ENCODE measurements at regions of chr19 and their contacts with region 1.

Region 1: DNA sequence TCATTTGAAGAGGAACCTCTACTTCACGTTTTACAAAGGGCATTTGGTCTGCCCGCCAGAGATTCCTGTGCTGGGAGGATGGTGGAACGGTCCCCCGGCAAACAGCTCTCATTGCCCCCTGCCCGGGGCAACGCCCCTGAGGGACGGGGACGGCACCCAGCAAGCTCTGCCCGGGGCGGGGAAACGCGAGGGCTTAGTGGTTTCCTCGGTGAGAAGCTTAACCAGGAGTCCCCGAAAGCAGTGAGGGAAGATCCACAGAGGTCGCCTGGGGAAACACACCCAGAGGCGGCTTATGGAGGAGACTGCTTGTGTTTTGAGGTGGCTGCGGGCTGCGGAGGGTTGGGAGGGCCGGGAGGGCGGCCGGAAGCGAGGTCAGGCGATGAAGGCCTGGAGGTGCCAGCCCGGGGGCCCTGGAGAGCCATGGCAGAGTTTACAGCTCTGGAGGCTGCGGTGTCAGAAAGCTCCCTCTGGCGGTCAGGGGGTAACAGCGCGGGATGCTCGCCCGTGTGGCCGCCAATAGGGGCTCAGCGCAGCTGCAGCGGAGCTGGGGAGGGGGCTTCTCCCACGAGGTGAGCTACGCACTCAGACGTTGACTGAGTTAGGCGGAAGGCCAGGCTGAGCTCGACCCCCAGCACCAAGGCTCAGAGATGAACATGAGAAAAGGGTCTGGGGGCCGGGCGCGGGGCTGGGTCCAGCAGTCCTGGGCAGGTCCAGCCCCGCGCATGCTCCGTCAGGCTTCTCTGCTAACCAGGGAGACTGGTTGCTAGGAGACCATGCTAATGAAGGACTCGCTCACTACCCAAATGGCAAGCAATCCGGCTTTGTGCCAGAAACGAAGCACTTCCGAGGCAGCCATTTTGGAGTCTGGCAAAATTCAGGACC is 652 bp upstream of the TPGS1 start:
- DNase-seq: peak; percentile 90 to 98 (median 97)
- H3K4me3 ChIP-seq: peak overlapping the region; percentile 96
- H3K4me3 Mint-ChIP-seq: peak overlapping the region; percentile 88 to 99 (median 93)
- H3K27ac ChIP-seq: peak overlapping the region; percentile 85
- H3K27ac Mint-ChIP-seq: peak overlapping the region; percentile 91 to 100 (median 100)
- H3K4me1 ChIP-seq: peaks cover 45% of the 10 kb centered on the region
- H3K4me1 Mint-ChIP-seq: peaks cover 32 to 45% (median 40%) of the 10 kb centered on the region in 3 donors
- H3K27me3 ChIP-seq: no peaks in the 10 kb centered on the region
- H3K27me3 Mint-ChIP-seq: no peaks in the 10 kb centered on the region

Region 2: GRCh38 chr19:383922-384798 is 122.5 kb before region 1 on chr19:
- CTCF ChIA-PET with region 1: no interaction called
- POLR2A ChIA-PET with region 1: no interaction called
- DNase-seq: peak in 1 of 5 donors; percentile 40
- H3K4me3 ChIP-seq: no peak overlapping the region
- H3K4me3 Mint-ChIP-seq: no peak overlapping the region
- H3K27ac ChIP-seq: no peak overlapping the region
- H3K27ac Mint-ChIP-seq: peak overlapping the region in 1 of 8 donors; percentile 24
- H3K4me1 ChIP-seq: peaks cover 5% of the 10 kb centered on the region
- H3K4me1 Mint-ChIP-seq: peaks cover 10 to 13% (median 13%) of the 10 kb centered on the region in 3 donors
- H3K27me3 ChIP-seq: peaks cover 13% of the 10 kb centered on the region
- H3K27me3 Mint-ChIP-seq: peaks cover 34 to 65% of the 10 kb centered on the region in 2 donors

Region 3: GRCh38 chr19:488505-489417 is 17.9 kb before region 1 on chr19:
- CTCF ChIA-PET with region 1: interaction called, 25 read pairs
- POLR2A ChIA-PET with region 1: interaction called, 26 read pairs
- DNase-seq: peak; percentile 81 to 91 (median 90)
- H3K4me3 ChIP-seq: peak overlapping the region; percentile 68
- H3K4me3 Mint-ChIP-seq: peak overlapping the region; percentile 75 to 89 (median 80)
- H3K27ac ChIP-seq: peak overlapping the region; percentile 83
- H3K27ac Mint-ChIP-seq: peak overlapping the region in 5 of 8 donors; percentile 39 to 90 (median 47)
- H3K4me1 ChIP-seq: peaks cover 4% of the 10 kb centered on the region
- H3K4me1 Mint-ChIP-seq: peaks cover 0 to 15% (median 5%) of the 10 kb centered on the region in 3 donors
- H3K27me3 ChIP-seq: no peaks in the 10 kb centered on the region
- H3K27me3 Mint-ChIP-seq: peaks cover 6 to 15% of the 10 kb centered on the region in 2 donors

Region 4: GRCh38 chr19:495402-496186 is 11.1 kb before region 1 on chr19:
- CTCF ChIA-PET with region 1: interaction called, 15 read pairs
- POLR2A ChIA-PET with region 1: interaction called, 5 read pairs
- DNase-seq: peak in 2 of 5 donors; percentile 28 to 50
- H3K4me3 ChIP-seq: no peak overlapping the region
- H3K4me3 Mint-ChIP-seq: no peak overlapping the region
- H3K27ac ChIP-seq: no peak overlapping the region
- H3K27ac Mint-ChIP-seq: no peak overlapping the region
- H3K4me1 ChIP-seq: no peaks in the 10 kb centered on the region
- H3K4me1 Mint-ChIP-seq: peaks cover 0 to 22% (median 3%) of the 10 kb centered on the region in 3 donors
- H3K27me3 ChIP-seq: peaks cover 16% of the 10 kb centered on the region
- H3K27me3 Mint-ChIP-seq: peaks cover 13 to 14% of the 10 kb centered on the region in 2 donors

Region 5: GRCh38 chr19:519449-519865 is 12.8 kb after region 1 on chr19:
- CTCF ChIA-PET with region 1: interaction called, 24 read pairs
- POLR2A ChIA-PET with region 1: interaction called, 9 read pairs
- DNase-seq: no peak
- H3K4me3 ChIP-seq: no peak overlapping the region
- H3K4me3 Mint-ChIP-seq: no peak overlapping the region
- H3K27ac ChIP-seq: no peak overlapping the region
- H3K27ac Mint-ChIP-seq: no peak overlapping the region
- H3K4me1 ChIP-seq: no peaks in the 10 kb centered on the region
- H3K4me1 Mint-ChIP-seq: peaks cover 9 to 13% (median 10%) of the 10 kb centered on the region in 3 donors
- H3K27me3 ChIP-seq: no peaks in the 10 kb centered on the region
- H3K27me3 Mint-ChIP-seq: no peaks in the 10 kb centered on the region

Region 6: GRCh38 chr19:531009-531752 is 24.5 kb after region 1 on chr19:
- CTCF ChIA-PET with region 1: interaction called, 55 read pairs
- POLR2A ChIA-PET with region 1: interaction called, 18 read pairs
- DNase-seq: peak; percentile 84 to 95 (median 91)
- H3K4me3 ChIP-seq: peak overlapping the region; percentile 53
- H3K4me3 Mint-ChIP-seq: peak overlapping the region; percentile 79 to 94 (median 85)
- H3K27ac ChIP-seq: peak overlapping the region; percentile 74
- H3K27ac Mint-ChIP-seq: peak overlapping the region; percentile 54 to 91 (median 84)
- H3K4me1 ChIP-seq: peaks cover 19% of the 10 kb centered on the region
- H3K4me1 Mint-ChIP-seq: peaks cover 9 to 29% (median 18%) of the 10 kb centered on the region in 3 donors
- H3K27me3 ChIP-seq: no peaks in the 10 kb centered on the region
- H3K27me3 Mint-ChIP-seq: peaks cover 1 to 4% of the 10 kb centered on the region in 2 donors

Region 7: DNA sequence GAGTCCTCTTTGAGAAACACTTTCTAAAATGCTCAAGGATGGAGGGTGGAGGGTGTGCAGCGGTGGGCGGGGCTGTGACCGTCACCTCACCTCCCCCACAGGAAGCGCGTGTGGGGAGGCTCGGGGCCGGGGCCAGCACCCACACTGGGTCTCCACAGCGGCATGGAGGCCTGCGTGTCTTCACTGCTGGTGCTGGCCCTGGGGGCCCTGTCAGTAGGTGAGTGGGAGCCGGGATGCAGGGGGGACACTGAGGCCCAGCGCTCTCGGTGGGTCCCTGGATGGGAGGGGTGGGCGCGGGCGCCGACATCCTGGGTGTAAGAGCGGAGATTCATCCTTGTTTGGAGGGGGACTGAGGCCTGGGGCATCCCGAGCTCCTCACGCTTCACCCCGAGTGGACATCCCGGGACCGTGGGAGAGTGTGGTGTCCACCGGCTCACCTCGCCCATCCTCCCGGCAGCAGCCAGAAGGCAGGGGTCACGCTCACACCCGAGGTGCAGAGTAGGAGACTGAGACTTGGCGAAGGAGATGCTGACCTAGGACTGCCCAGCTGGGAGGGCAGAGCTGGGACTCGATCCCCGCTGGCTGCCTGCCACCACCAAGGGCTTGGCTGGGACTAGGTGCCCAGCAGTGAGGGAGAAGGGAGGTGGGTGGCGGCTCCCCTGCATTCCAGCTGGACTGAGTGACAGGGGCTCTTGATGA is 37.4 kb after region 1 on chr19 and contains the start of gene GZMM:
- CTCF ChIA-PET with region 1: interaction called, 11 read pairs
- POLR2A ChIA-PET with region 1: interaction called, 3 read pairs
- DNase-seq: peak; percentile 78 to 91 (median 83)
- H3K4me3 ChIP-seq: peak within 1 kb of the TSS; percentile 89
- H3K4me3 Mint-ChIP-seq: peak within 1 kb of the TSS; percentile 92 to 99 (median 94)
- H3K27ac ChIP-seq: peak within 1 kb of the TSS; percentile 87
- H3K27ac Mint-ChIP-seq: peak within 1 kb of the TSS; percentile 90 to 99 (median 96)
- H3K4me1 ChIP-seq: peaks cover 17% of the 10 kb centered on the region
- H3K4me1 Mint-ChIP-seq: peaks cover 19 to 36% (median 20%) of the 10 kb centered on the region in 3 donors
- H3K27me3 ChIP-seq: no peaks in the 10 kb centered on the region
- H3K27me3 Mint-ChIP-seq: peaks cover 0 to 6% of the 10 kb centered on the region in 2 donors
- total RNA-seq, gene GZMM: 48.8 to 50.5 TPM

Measured in CD8-positive, alpha-beta memory T cell (primary cell).